SK-N-SH (cell line): ENCODE measurements at regions of chr2 and their contacts with region 1.

Region 1: GRCh38 chr2:201158111-201158929 is 24.6 kb upstream of the CASP10 start:
- DNase-seq: peak; percentile 76
- H3K4me3 ChIP-seq: no peak overlapping the region; a peak in 1 of 4 replicates
- H3K27ac ChIP-seq: peak overlapping the region; percentile 60 to 71
- H3K4me1 ChIP-seq: peaks cover 5% of the 10 kb centered on the region in 2 experiments; a peak in 2 of 4 replicates
- H3K27me3 ChIP-seq: no peaks in the 10 kb centered on the region
- CTCF ChIP-seq: peak; percentile 84
- EP300 ChIP-seq: no peak
- RAD21 ChIP-seq: peak; percentile 91

Region 2: DNA sequence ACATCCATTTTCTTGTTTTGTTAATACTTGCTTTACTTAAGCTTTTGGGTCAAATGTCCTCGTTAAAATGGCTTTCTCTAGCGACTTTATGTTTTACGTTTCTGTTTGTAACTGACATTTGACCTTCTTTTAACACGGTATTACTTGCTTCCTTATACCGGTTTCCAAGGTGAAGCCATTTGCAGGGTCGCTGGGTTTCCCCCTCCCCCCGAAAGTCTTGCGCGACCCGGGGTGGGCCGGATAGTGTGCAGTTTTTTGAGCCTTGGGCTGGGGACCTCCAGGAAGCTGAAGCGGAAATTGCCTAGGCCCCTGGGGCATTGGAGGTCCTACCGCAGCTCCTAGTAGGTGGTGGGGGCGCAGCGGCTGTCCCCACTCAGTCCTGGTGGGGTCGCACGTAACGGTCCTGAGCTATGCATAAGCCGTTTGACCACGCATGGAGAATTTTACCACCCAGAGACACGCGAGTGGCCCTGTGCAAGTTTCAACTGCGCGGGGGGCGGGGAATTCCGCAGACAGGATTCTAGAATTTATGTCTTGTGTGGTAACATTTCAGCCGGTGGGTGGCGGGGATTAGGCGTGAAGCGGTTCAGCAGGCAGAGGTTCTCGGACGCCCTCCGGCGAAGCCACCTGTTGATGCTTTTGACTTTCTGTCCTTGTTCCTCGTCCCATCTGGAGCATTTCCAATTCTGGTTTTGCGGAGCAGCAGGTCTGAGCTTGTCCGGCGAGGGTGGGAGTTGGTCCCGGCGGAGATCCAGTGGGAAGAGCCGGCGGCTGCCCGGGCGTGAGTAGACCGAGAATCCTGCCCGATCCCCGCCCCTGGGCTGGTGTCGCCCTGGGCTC is 40.0 kb before region 1 on chr2:
- CTCF ChIA-PET with region 1: interaction called, 16 read pairs
- POLR2A ChIA-PET with region 1: no interaction called
- DNase-seq: peak; percentile 49
- H3K4me3 ChIP-seq: peak overlapping the region; percentile 52 to 86
- H3K27ac ChIP-seq: peak overlapping the region; percentile 40 to 92; a peak in 3 of 4 replicates
- H3K4me1 ChIP-seq: peaks cover 0 to 19% of the 10 kb centered on the region in 2 experiments; a peak in 3 of 4 replicates
- H3K27me3 ChIP-seq: no peaks in the 10 kb centered on the region
- CTCF ChIP-seq: peak; percentile 53
- EP300 ChIP-seq: no peak
- RAD21 ChIP-seq: peak; percentile 30

Region 3: DNA sequence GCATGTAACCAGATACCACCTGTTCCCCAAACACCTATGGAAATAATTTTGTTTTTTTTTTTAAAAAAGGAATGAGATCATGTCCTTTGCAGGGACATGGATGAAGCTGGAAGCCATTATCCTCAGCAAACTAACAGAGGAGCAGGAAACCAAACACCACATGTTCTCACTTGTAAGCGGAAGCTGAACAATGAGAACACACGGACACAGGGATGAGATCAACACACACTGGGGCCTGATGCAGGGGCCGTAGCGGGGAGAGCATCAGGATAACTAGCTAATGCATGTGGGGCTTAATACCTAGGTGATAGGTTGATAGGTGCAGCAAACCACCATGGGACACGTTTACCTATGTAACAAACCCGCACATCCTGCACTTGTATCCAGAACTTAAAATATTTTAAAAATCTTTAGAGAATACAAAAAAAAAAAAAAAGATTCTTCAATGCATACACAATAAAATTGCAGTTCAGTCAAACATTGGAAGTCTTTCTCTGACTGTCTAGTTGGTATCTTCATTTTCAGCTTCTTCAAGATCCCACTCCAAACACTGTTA is 13.0 kb after region 1 on chr2:
- CTCF ChIA-PET with region 1: interaction called, 23 read pairs
- POLR2A ChIA-PET with region 1: no interaction called
- DNase-seq: no peak
- H3K4me3 ChIP-seq: no peak overlapping the region
- H3K27ac ChIP-seq: no peak overlapping the region
- H3K4me1 ChIP-seq: no peaks in the 10 kb centered on the region
- H3K27me3 ChIP-seq: no peaks in the 10 kb centered on the region
- CTCF ChIP-seq: no peak
- EP300 ChIP-seq: no peak
- RAD21 ChIP-seq: no peak

Region 4: GRCh38 chr2:201182650-201183364 is 24.5 kb after region 1 on chr2 and contains the start of gene CASP10:
- CTCF ChIA-PET with region 1: interaction called, 13 read pairs
- POLR2A ChIA-PET with region 1: no interaction called
- DNase-seq: no peak
- H3K4me3 ChIP-seq: no peak within 1 kb of the TSS
- H3K27ac ChIP-seq: no peak within 1 kb of the TSS
- H3K4me1 ChIP-seq: no peaks in the 10 kb centered on the region
- H3K27me3 ChIP-seq: no peaks in the 10 kb centered on the region
- CTCF ChIP-seq: no peak
- EP300 ChIP-seq: no peak
- RAD21 ChIP-seq: no peak
- polyA plus RNA-seq, gene CASP10: 0.12 and 0.31 TPM in 2 replicates

Region 5: DNA sequence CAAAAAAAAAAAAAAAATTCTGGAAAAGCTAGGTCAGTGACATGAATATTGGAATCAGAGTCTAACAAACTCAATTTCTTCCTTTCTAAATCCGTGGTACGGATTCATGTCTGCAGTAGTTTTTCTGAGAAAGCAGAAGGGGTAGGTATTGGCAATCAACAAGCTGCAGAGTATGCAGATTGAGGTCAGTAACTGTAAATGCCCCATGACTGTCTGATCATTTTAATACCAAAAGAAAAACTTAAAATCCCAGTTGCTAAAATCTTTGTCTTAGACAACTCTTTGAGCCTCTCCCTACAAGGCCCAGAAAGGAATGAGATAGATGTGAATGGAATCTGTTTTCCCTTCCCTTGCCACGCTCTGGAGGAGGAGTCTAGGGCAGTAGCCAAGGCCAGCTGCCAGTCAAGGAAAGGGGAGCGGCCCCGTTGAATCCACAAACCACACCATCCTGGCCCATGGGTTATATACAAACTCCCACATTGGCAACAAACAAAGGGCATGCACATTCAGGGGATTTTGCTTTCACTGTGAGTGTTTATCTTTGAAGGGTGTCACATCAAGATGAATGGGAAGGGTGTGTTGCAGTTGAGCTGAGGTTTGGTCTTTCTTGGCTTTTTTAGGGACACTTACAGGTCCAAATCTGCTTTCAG is 95.9 kb after region 1 on chr2:
- CTCF ChIA-PET with region 1: no interaction called
- POLR2A ChIA-PET with region 1: no interaction called
- DNase-seq: no peak
- H3K4me3 ChIP-seq: no peak overlapping the region
- H3K27ac ChIP-seq: no peak overlapping the region
- H3K4me1 ChIP-seq: no peaks in the 10 kb centered on the region; a peak in 1 of 4 replicates
- H3K27me3 ChIP-seq: no peaks in the 10 kb centered on the region
- CTCF ChIP-seq: no peak
- EP300 ChIP-seq: no peak
- RAD21 ChIP-seq: no peak

Region 6: DNA sequence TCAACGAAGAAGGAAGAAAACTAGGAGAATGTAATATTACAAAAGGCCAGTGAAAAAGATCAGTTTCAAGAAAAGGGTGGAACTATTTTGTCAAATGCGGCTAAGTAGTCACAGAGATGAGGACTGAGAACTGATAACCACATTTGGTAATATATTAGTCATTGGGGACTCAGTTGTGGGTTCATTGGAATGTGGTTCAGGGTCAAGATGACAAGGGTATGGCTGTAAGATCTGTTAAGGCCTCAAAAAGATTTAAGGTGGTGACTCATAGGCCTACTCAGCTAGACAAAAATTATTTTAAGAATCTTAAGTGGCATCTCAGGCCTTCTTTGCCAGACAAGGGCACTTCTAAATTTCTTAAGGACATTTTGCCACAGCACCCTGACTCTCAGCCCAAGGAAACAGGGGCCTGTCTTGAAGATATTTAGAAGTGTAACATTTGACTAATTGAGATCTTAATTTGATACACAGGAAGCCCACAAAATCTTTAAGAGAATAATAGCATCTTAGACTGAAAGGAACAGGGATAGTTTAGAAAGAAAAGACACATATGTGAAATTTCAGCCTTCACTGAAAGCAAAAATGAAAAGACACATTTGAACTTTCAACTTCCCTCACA is 374.5 kb after region 1 on chr2:
- CTCF ChIA-PET with region 1: no interaction called
- POLR2A ChIA-PET with region 1: no interaction called
- DNase-seq: no peak
- H3K4me3 ChIP-seq: no peak overlapping the region
- H3K27ac ChIP-seq: peak overlapping the region in 1 of 2 experiments; percentile 61; a peak in 2 of 4 replicates
- H3K4me1 ChIP-seq: no peaks in the 10 kb centered on the region
- H3K27me3 ChIP-seq: no peaks in the 10 kb centered on the region
- CTCF ChIP-seq: no peak
- EP300 ChIP-seq: peak in 1 of 2 experiments; percentile 86; a peak in 1 of 4 replicates
- RAD21 ChIP-seq: no peak